Esophagus muscularis mucosa (tissue), 4 donors: ENCODE measurements at regions of chr9 and their contacts with region 1.

Region 1: GRCh38 chr9:116737152-116737546 is 50.0 kb downstream of the TRIM32 start:
- DNase-seq: no peak
- H3K4me3 ChIP-seq: no peak overlapping the region
- H3K27ac ChIP-seq: no peak overlapping the region
- H3K4me1 ChIP-seq: peaks cover 0 to 7% (median 6%) of the 10 kb centered on the region in 4 donors
- H3K27me3 ChIP-seq: no peaks in the 10 kb centered on the region
- CTCF ChIP-seq: peak; percentile 59 to 89 (median 73)
- EP300 ChIP-seq: no peak
- POLR2A ChIP-seq: no peak

Region 2: DNA sequence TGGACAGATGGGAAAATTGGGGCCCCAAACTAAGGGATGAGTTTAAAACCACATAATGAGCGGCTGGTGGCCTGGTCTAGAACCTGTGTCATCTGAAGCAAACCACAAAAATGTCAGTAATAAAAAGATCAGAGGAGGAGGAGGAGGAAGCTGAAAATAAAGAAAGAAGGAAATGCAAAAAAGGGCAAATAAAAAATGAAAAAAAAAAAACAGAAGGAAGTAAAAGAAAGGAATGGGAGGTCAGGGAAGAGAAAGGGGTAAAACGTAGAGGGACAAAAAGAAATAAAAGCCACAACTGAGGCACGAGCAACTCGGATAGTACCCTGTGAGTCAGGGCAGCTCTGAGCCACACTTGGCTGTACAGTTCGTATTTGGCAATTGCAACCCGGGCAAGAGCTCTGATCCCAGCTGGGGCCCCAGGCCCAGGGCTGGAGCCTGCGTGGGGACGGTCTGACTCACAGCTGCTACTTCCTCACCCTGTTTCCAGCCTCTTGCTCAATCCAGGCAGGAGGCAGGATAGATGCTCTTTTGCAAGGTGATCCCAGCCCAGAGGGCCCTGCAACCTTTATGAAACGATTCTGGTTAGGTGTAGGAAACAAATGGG is 188.0 kb before region 1 on chr9:
- intact Hi-C with region 1: no loop called
- DNase-seq: peak; percentile 92
- H3K4me3 ChIP-seq: no peak overlapping the region
- H3K27ac ChIP-seq: no peak overlapping the region
- H3K4me1 ChIP-seq: peaks cover 12 to 21% (median 17%) of the 10 kb centered on the region in 4 donors
- H3K27me3 ChIP-seq: no peaks in the 10 kb centered on the region
- CTCF ChIP-seq: no peak
- EP300 ChIP-seq: no peak
- POLR2A ChIP-seq: no peak

Region 3: GRCh38 chr9:116860509-116861120 is 123.5 kb after region 1 on chr9:
- intact Hi-C with region 1: loop called (anchors 10 kb)
- DNase-seq: no peak
- H3K4me3 ChIP-seq: no peak overlapping the region
- H3K27ac ChIP-seq: no peak overlapping the region
- H3K4me1 ChIP-seq: no peaks in the 10 kb centered on the region
- H3K27me3 ChIP-seq: no peaks in the 10 kb centered on the region
- CTCF ChIP-seq: peak; percentile 58 to 71 (median 62)
- EP300 ChIP-seq: no peak
- POLR2A ChIP-seq: no peak